ENCODE measurements at regions of chr6 and their contacts with region 1.

Region 1: GRCh38 chr6:10434692-10435376 is 20.0 kb upstream of the TFAP2A start:
- DNase-seq: no peak
- ATAC-seq: no peak
- H3K4me3 Mint-ChIP-seq: no peak overlapping the region
- H3K27ac Mint-ChIP-seq: no peak overlapping the region
- H3K4me1 Mint-ChIP-seq: peaks cover 2% of the 10 kb centered on the region
- H3K27me3 Mint-ChIP-seq: peaks cover 13% of the 10 kb centered on the region
- CTCF ChIP-seq: peak; percentile 83

Region 2: DNA sequence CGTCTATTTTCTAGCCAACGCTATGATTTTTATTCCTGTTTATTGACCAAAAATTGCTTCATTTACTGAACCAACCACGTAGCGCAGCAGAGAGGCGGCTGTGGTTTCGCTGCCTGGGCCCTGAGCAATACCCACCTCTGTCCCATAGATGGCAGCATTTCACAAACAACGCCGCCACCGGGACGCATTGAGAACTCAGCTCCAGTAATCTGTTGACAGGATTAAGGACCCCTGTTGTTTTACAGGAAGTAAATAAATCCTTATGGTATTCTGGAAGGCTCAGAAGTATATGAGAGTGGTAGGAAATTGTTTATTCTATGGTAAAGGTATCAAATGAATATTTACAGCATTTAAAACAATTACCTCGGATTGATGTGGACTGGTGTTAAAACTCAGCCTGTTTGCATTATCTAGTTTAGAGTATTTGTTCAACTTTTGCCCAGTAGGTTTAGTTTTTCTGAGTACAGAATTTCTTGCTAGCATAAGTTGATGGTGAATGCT is 1451.6 kb before region 1 on chr6:
- CTCF ChIA-PET with region 1: interaction called, 7 read pairs
- POLR2A ChIA-PET with region 1: no interaction called
- intact Hi-C with region 1: loop called (anchors 5 kb)
- DNase-seq: peak; percentile 68
- ATAC-seq: peak; percentile 94
- H3K4me3 Mint-ChIP-seq: no peak overlapping the region
- H3K27ac Mint-ChIP-seq: no peak overlapping the region
- H3K4me1 Mint-ChIP-seq: no peaks in the 10 kb centered on the region
- H3K27me3 Mint-ChIP-seq: peaks cover 18% of the 10 kb centered on the region
- CTCF ChIP-seq: peak; percentile 95

Region 3: GRCh38 chr6:10534419-10534762 is 99.6 kb after region 1 on chr6:
- CTCF ChIA-PET with region 1: no interaction called
- POLR2A ChIA-PET with region 1: no interaction called
- intact Hi-C with region 1: no loop called
- DNase-seq: no peak
- ATAC-seq: no peak
- H3K4me3 Mint-ChIP-seq: no peak overlapping the region
- H3K27ac Mint-ChIP-seq: no peak overlapping the region
- H3K4me1 Mint-ChIP-seq: peaks cover 31% of the 10 kb centered on the region
- H3K27me3 Mint-ChIP-seq: no peaks in the 10 kb centered on the region
- CTCF ChIP-seq: no peak